ENCODE measurements at regions of chr9 and their contacts with region 1.

Region 1: DNA sequence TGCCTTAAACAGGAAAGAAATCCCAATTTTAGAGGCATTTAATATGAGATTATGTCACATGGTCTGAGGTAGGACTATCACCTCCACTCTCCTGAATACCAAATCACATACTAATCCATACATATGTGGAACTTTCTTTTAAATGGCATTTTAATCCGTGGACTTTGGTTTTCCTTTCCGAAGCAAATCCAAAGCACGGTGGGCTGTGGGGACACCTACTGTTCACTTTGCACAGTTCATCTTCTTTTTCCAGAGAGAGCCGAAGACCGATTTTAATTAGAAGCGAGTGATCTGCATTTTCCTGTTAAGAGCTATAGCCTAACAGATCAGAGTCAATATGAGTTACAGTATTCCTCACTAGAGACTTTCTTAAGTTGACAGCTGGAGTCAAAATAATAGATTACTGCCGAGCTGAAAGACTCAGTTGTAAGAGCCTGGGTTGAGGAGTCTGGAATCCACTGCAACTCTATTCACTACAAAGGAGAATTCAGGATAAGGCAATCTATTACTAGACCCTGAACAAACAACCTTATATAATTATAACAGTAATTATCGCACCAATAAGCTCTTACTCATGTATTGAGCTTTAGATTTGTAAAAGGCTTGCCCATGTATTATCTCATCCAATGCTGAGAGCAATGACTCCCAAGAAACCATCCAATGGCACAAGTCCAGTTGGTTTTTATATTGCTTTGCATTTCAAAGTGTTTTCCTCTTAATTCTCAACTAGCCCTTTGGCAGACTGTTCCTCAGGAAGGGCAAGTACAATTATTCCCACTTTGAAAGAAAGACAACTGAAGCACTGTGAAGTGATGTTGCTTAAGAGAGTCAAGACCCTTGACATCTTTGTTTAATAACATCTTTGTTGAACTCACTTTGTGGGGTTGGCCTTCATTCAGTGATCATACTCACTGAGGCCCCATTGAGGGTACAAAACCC is 144.7 kb downstream of the TRPM6 start:
- DNase-seq: peak; percentile 17
- H3K4me3 Mint-ChIP-seq: no peak overlapping the region
- H3K27ac Mint-ChIP-seq: no peak overlapping the region
- H3K4me1 Mint-ChIP-seq: no peaks in the 10 kb centered on the region
- H3K27me3 Mint-ChIP-seq: peaks cover 54% of the 10 kb centered on the region
- CTCF ChIP-seq: no peak

Region 2: GRCh38 chr9:74577956-74578355 is 165.1 kb before region 1 on chr9:
- CTCF ChIA-PET with region 1: no interaction called
- intact Hi-C with region 1: loop called (anchors 2 kb)
- DNase-seq: no peak
- H3K4me3 Mint-ChIP-seq: no peak overlapping the region
- H3K27ac Mint-ChIP-seq: no peak overlapping the region
- H3K4me1 Mint-ChIP-seq: no peaks in the 10 kb centered on the region
- H3K27me3 Mint-ChIP-seq: peaks cover 11% of the 10 kb centered on the region
- CTCF ChIP-seq: peak; percentile 30

Region 3: GRCh38 chr9:74711341-74711740 is 31.7 kb before region 1 on chr9:
- CTCF ChIA-PET with region 1: no interaction called
- intact Hi-C with region 1: no loop called
- DNase-seq: no peak
- H3K4me3 Mint-ChIP-seq: no peak overlapping the region
- H3K27ac Mint-ChIP-seq: no peak overlapping the region
- H3K4me1 Mint-ChIP-seq: no peaks in the 10 kb centered on the region
- H3K27me3 Mint-ChIP-seq: peaks cover 15% of the 10 kb centered on the region
- CTCF ChIP-seq: no peak

Region 4: DNA sequence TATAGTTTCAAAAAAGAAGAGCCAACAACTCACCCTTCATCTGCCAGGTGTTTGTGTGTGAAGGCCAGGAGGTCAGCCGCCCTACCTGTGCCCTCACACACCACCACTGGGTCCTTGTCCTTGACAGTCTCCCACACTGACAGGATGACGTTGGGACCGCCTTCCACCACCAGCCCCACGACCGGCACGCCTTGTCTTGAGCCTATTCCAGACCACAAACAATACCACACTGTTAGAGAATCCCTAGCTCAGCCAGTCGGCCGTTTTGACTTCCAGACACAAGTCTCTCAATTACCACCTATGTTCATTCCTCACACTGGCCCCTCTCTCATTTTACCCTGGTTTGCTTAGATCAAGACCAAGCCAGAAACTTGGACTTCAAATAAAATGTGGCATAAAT is 78.6 kb after region 1 on chr9:
- CTCF ChIA-PET with region 1: no interaction called
- intact Hi-C with region 1: loop called (anchors 2 kb)
- DNase-seq: no peak
- H3K4me3 Mint-ChIP-seq: no peak overlapping the region
- H3K27ac Mint-ChIP-seq: no peak overlapping the region
- H3K4me1 Mint-ChIP-seq: no peaks in the 10 kb centered on the region
- H3K27me3 Mint-ChIP-seq: no peaks in the 10 kb centered on the region
- CTCF ChIP-seq: no peak

Measured in Calu3 (cell line).